IMR-90 (cell line): ENCODE measurements at regions of chr20 and their contacts with region 1.

Region 1: GRCh38 chr20:11216451-11217314 is 542.9 kb upstream of the JAG1 start:
- DNase-seq: peak; percentile 82
- ATAC-seq: peak; percentile 80
- H3K4me3 ChIP-seq: no peak overlapping the region
- H3K27ac ChIP-seq: peak overlapping the region; percentile 85
- H3K4me1 ChIP-seq: peaks cover 12% of the 10 kb centered on the region
- H3K27me3 ChIP-seq: no peaks in the 10 kb centered on the region
- CTCF ChIP-seq: no peak
- POLR2A ChIP-seq: no peak
- RAD21 ChIP-seq: no peak

Region 2: GRCh38 chr20:10225439-10226060 is 991.1 kb before region 1 on chr20:
- CTCF ChIA-PET with region 1: no interaction called
- POLR2A ChIA-PET with region 1: no interaction called
- dilution Hi-C with region 1: no loop called
- in situ Hi-C with region 1: no loop called
- intact Hi-C with region 1: no loop called
- DNase-seq: no peak
- ATAC-seq: peak; percentile 68
- H3K4me3 ChIP-seq: no peak overlapping the region
- H3K27ac ChIP-seq: no peak overlapping the region
- H3K4me1 ChIP-seq: no peaks in the 10 kb centered on the region
- H3K27me3 ChIP-seq: no peaks in the 10 kb centered on the region
- CTCF ChIP-seq: 0 out of 2 replicates have a peak, but pooled peaks have one; percentile 18
- POLR2A ChIP-seq: no peak
- RAD21 ChIP-seq: no peak

Region 3: DNA sequence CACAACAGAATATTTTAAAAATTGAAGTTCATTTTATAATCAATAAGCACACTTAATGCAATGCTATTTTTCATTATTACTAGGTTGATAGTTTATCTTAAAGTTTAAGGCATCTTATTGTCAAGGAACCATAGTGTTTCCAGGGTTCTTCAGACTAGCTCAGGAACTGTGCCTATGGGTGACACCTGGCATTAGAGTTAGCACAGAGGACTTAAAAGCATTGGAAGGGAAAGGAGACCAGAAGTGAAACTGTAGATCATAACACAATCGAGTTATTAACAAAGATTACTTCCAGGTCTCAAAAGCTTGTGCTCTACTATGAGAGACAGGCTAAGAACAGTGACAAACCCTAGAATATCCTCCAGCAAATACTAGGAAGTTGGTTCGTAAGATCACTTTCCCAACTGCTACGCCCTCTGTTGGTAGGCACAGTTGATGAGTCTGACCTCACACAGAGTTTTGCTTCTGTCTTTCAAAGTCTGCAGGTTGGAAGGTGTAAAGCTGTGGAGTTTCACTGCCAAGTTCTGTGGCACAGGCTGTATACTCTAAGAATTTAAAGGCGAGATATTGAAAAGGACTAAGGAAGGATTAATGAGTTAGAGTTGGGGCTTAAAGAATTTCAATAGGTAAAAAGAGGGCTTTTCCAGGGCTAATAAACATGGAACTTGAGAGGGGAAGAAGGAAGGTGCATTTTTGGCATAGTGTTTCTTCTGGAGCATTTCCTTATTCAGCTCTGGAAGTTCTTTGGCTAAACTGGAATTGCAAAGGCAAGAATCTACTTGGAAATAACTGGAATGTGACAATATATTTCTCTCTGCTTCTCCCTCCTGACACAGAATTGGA is 11.5 kb before region 1 on chr20:
- CTCF ChIA-PET with region 1: interaction called, 10 read pairs
- POLR2A ChIA-PET with region 1: no interaction called
- dilution Hi-C with region 1: no loop called
- in situ Hi-C with region 1: no loop called
- intact Hi-C with region 1: no loop called
- DNase-seq: peak; percentile 71
- ATAC-seq: peak; percentile 90
- H3K4me3 ChIP-seq: no peak overlapping the region
- H3K27ac ChIP-seq: no peak overlapping the region
- H3K4me1 ChIP-seq: no peaks in the 10 kb centered on the region; the same call in none of the 2 replicates
- H3K27me3 ChIP-seq: no peaks in the 10 kb centered on the region
- CTCF ChIP-seq: peak; percentile 72
- POLR2A ChIP-seq: no peak
- RAD21 ChIP-seq: peak; percentile 77